ENCODE measurements at regions of chr12 and their contacts with region 1.

Region 1: GRCh38 chr12:44930972-44931600 is 55.0 kb upstream of the NELL2 start:
- DNase-seq: peak; percentile 47
- H3K4me3 ChIP-seq: no peak overlapping the region
- H3K27ac ChIP-seq: no peak overlapping the region
- H3K4me1 ChIP-seq: no peaks in the 10 kb centered on the region
- H3K27me3 ChIP-seq: no peaks in the 10 kb centered on the region
- CTCF ChIP-seq: peak; percentile 28 to 50

Region 2: GRCh38 chr12:43758728-43759563 is 1172.1 kb before region 1 on chr12 and contains the starts of genes IRAK4 and PUS7L:
- CTCF ChIA-PET with region 1: no interaction called
- dilution Hi-C with region 1: no loop called
- in situ Hi-C with region 1: loop called in 1 of 2 experiments (anchors 25 kb)
- intact Hi-C with region 1: no loop called
- DNase-seq: peak; percentile 94
- H3K4me3 ChIP-seq: peak within 1 kb of the TSS; percentile 65 to 87 (median 80)
- H3K27ac ChIP-seq: peak within 1 kb of the TSS; percentile 81
- H3K4me1 ChIP-seq: peaks cover 25% of the 10 kb centered on the region
- H3K27me3 ChIP-seq: no peaks in the 10 kb centered on the region
- CTCF ChIP-seq: peak; percentile 39 to 57
- total RNA-seq, gene IRAK4: 15.8 to 18.7 TPM
- total RNA-seq, gene PUS7L: 18.7 to 20.0 TPM

Region 3: GRCh38 chr12:43957732-43958372 is 973.2 kb before region 1 on chr12:
- CTCF ChIA-PET with region 1: interaction called, 4 read pairs
- dilution Hi-C with region 1: no loop called
- in situ Hi-C with region 1: loop called in 1 of 2 experiments (anchors 25 kb)
- intact Hi-C with region 1: loop called (anchors 1 kb)
- DNase-seq: peak; percentile 52
- H3K4me3 ChIP-seq: no peak overlapping the region
- H3K27ac ChIP-seq: no peak overlapping the region
- H3K4me1 ChIP-seq: no peaks in the 10 kb centered on the region
- H3K27me3 ChIP-seq: no peaks in the 10 kb centered on the region
- CTCF ChIP-seq: peak; percentile 56 to 62

Region 4: GRCh38 chr12:44000309-44000952 is 930.7 kb before region 1 on chr12:
- CTCF ChIA-PET with region 1: no interaction called
- dilution Hi-C with region 1: no loop called
- in situ Hi-C with region 1: loop called in 1 of 2 experiments (anchors 25 kb)
- intact Hi-C with region 1: loop called (anchors 5 kb)
- DNase-seq: peak; percentile 72
- H3K4me3 ChIP-seq: no peak overlapping the region
- H3K27ac ChIP-seq: no peak overlapping the region
- H3K4me1 ChIP-seq: no peaks in the 10 kb centered on the region
- H3K27me3 ChIP-seq: no peaks in the 10 kb centered on the region
- CTCF ChIP-seq: peak; percentile 81 to 90

Region 5: GRCh38 chr12:44015335-44015941 is 915.6 kb before region 1 on chr12:
- CTCF ChIA-PET with region 1: no interaction called
- dilution Hi-C with region 1: no loop called
- in situ Hi-C with region 1: loop called in 1 of 2 experiments (anchors 25 kb)
- intact Hi-C with region 1: loop called (anchors 2 kb)
- DNase-seq: peak; percentile 41
- H3K4me3 ChIP-seq: no peak overlapping the region
- H3K27ac ChIP-seq: no peak overlapping the region
- H3K4me1 ChIP-seq: no peaks in the 10 kb centered on the region
- H3K27me3 ChIP-seq: no peaks in the 10 kb centered on the region
- CTCF ChIP-seq: peak; percentile 50 to 63

Region 6: GRCh38 chr12:44317651-44318126 is 613.4 kb before region 1 on chr12:
- CTCF ChIA-PET with region 1: no interaction called
- dilution Hi-C with region 1: no loop called
- in situ Hi-C with region 1: no loop called
- intact Hi-C with region 1: loop called (anchors 5 kb)
- DNase-seq: no peak
- H3K4me3 ChIP-seq: no peak overlapping the region
- H3K27ac ChIP-seq: no peak overlapping the region
- H3K4me1 ChIP-seq: peaks cover 8% of the 10 kb centered on the region
- H3K27me3 ChIP-seq: no peaks in the 10 kb centered on the region
- CTCF ChIP-seq: peak; percentile 35 to 62

Region 7: GRCh38 chr12:44774815-44775411 is 156.2 kb before region 1 on chr12:
- CTCF ChIA-PET with region 1: no interaction called
- dilution Hi-C with region 1: no loop called
- in situ Hi-C with region 1: no loop called
- intact Hi-C with region 1: loop called (anchors 2 kb)
- DNase-seq: peak; percentile 15
- H3K4me3 ChIP-seq: no peak overlapping the region
- H3K27ac ChIP-seq: no peak overlapping the region
- H3K4me1 ChIP-seq: no peaks in the 10 kb centered on the region
- H3K27me3 ChIP-seq: no peaks in the 10 kb centered on the region
- CTCF ChIP-seq: peak; percentile 69 to 85

Region 8: DNA sequence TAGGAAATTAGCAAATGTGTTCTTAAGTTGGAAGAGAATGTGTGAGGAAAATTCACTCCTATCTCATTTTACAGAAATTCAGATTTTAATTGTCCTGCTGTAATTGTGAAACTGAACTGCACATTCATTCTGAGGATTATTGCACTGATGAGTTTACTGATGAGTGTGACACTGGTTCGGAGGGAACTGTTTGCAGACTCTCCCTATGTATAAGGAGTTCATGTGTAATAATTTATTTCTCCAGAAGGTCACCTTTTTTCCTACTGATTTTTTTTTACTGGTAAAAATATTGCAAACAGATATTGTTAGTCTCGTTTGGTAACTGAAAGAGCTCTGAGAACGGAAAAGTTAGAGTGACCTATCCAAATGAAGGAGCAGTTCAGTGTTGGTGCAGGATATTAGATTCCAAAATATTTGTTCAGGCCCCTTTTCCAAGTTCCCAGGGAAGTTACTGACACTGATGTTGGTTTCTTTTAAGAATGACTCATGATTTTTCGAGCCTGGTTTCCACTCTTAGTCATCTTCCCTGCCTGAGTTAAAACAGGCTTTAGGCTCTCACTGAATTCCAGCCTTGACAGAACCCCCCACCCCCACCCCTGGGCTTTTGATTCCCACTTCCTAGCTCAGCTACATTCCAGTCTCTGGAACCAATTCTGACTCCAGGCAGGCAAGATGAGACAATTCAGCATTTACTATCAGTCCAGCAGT is 303.2 kb after region 1 on chr12:
- CTCF ChIA-PET with region 1: no interaction called
- dilution Hi-C with region 1: no loop called
- in situ Hi-C with region 1: no loop called
- intact Hi-C with region 1: no loop called
- DNase-seq: peak; percentile 96
- H3K4me3 ChIP-seq: peak overlapping the region in 1 of 3 experiments; percentile 28
- H3K27ac ChIP-seq: peak overlapping the region; percentile 98
- H3K4me1 ChIP-seq: peaks cover 51% of the 10 kb centered on the region
- H3K27me3 ChIP-seq: no peaks in the 10 kb centered on the region
- CTCF ChIP-seq: no peak